Left ventricle myocardium inferior (tissue), 1 donor: ENCODE measurements at regions of chr11 and their contacts with region 1.

Region 1: DNA sequence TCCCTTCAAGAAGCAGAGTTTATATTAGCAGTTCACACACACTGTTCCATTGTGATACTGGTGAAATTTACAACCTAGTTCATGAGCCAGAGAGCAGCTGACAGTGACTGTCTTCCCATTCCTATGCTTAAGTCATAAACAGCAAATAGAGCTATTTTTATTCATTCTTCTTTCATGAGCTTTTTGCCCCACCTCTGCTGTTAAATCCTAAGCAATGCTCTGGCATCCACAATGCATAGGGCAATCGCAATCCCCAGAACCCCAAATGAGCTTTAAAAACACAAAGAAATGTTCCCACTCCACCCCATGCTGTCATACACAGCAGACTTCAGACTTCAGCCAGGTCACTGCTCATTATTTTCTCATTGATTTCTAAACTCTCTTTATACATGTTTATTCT is 307.5 kb downstream of the ETS1 start:
- DNase-seq: no peak
- H3K4me3 ChIP-seq: no peak overlapping the region
- H3K27ac ChIP-seq: no peak overlapping the region
- H3K4me1 ChIP-seq: no peaks in the 10 kb centered on the region
- H3K27me3 ChIP-seq: no peaks in the 10 kb centered on the region
- CTCF ChIP-seq: no peak

Region 2: GRCh38 chr11:127709960-127710359 is 569.9 kb before region 1 on chr11:
- intact Hi-C with region 1: no loop called
- DNase-seq: no peak
- H3K4me3 ChIP-seq: no peak overlapping the region
- H3K27ac ChIP-seq: no peak overlapping the region
- H3K4me1 ChIP-seq: no peaks in the 10 kb centered on the region
- H3K27me3 ChIP-seq: no peaks in the 10 kb centered on the region
- CTCF ChIP-seq: no peak

Region 3: GRCh38 chr11:127986073-127986472 is 293.8 kb before region 1 on chr11:
- intact Hi-C with region 1: no loop called
- DNase-seq: no peak
- H3K4me3 ChIP-seq: no peak overlapping the region
- H3K27ac ChIP-seq: no peak overlapping the region
- H3K4me1 ChIP-seq: no peaks in the 10 kb centered on the region
- H3K27me3 ChIP-seq: no peaks in the 10 kb centered on the region
- CTCF ChIP-seq: no peak

Region 4: GRCh38 chr11:128180446-128181087 is 99.3 kb before region 1 on chr11:
- intact Hi-C with region 1: loop called (anchors 10 kb)
- DNase-seq: no peak
- H3K4me3 ChIP-seq: no peak overlapping the region
- H3K27ac ChIP-seq: no peak overlapping the region
- H3K4me1 ChIP-seq: no peaks in the 10 kb centered on the region
- H3K27me3 ChIP-seq: no peaks in the 10 kb centered on the region
- CTCF ChIP-seq: no peak

Region 5: GRCh38 chr11:128453444-128454336 is 173.8 kb after region 1 on chr11:
- intact Hi-C with region 1: no loop called
- DNase-seq: peak; percentile 60
- H3K4me3 ChIP-seq: no peak overlapping the region
- H3K27ac ChIP-seq: peak overlapping the region; percentile 80
- H3K4me1 ChIP-seq: peaks cover 71% of the 10 kb centered on the region
- H3K27me3 ChIP-seq: no peaks in the 10 kb centered on the region
- CTCF ChIP-seq: no peak